Transverse colon (tissue), 4 donors: ENCODE measurements at regions of chr17 and their contacts with region 1.

Region 1: DNA sequence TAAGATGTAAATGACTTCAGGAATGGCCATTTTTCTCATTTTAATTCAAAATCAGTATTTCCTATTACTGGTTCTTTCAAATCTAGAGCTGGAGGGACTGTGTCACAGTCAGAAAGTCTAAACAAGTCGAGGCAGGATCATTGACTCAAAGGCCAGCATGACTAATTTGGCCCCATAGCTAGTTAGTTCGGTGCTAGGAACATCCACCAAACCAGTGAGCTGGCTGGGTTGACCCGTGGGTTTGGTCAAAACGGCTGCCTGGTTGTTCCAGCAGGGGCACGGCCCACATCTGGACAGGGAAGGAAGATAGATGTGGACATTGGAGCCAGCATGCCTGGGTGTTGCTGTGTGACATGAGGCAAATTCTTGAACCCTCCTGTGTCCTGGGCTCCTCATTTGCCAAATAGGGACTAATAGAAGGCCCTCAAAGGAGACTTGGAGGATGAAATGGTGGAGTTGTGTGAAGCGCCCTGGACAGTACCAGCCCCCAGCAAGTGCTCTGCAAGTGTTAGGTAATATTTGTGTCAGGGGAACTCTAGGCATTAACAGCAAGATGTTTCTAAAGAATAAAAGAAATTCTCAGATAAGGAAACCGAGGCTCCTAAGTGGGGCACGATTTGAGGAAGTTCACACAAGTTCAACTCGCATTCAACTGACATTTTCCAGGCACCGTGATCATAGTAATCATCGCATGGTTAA is 46.2 kb downstream of the MEOX1 start:
- DNase-seq: no peak
- H3K4me3 ChIP-seq: no peak overlapping the region
- H3K27ac ChIP-seq: no peak overlapping the region
- H3K4me1 ChIP-seq: peaks cover 0 to 4% (median 0%) of the 10 kb centered on the region in 4 donors
- H3K27me3 ChIP-seq: no peaks in the 10 kb centered on the region
- CTCF ChIP-seq: no peak
- EP300 ChIP-seq: no peak
- POLR2A ChIP-seq: no peak

Region 2: DNA sequence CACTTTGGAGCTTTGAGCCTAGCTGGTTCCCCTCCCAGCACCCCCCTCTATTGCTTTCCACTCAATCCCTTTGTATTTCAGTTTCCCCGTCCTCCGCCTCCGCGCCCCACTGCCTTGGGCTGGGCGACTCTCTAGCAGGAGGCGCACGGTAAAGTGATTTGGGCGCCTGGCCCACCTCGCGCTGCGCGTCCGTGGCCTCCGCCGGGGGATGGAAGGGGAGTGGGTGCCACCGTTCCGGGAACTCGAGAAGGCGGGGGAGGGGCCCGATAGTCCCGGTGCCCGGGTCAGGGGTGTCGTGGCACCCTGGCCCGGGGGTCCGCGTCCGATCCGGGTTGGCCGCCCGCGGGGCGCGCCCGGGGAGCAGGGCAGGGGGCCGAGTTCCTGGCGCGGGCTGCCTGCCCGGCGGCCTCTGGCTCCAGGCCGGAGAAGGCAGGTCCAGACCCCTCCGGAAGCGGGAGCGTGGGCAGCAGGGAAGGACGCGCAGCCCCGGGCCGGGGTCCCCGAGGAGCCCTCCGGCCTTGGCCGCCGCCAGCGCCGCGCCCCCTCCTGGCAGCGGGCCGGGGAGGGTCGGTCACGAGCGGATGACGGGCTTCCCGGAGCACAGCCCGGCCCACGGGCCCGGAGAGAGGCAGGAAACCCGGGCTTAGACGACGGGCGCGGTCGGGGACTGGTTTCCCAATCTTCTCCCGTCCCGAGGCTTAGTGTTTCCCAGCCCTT is 30.4 kb after region 1 on chr17:
- in situ Hi-C with region 1: no loop called
- intact Hi-C with region 1: loop called (anchors 1 kb)
- DNase-seq: peak; percentile 37
- H3K4me3 ChIP-seq: peak overlapping the region; percentile 26 to 50 (median 37)
- H3K27ac ChIP-seq: peak overlapping the region; percentile 65 to 73 (median 66)
- H3K4me1 ChIP-seq: peaks cover 0 to 12% (median 4%) of the 10 kb centered on the region in 4 donors
- H3K27me3 ChIP-seq: peaks cover 33% of the 10 kb centered on the region
- CTCF ChIP-seq: no peak
- EP300 ChIP-seq: no peak
- POLR2A ChIP-seq: no peak

Region 3: DNA sequence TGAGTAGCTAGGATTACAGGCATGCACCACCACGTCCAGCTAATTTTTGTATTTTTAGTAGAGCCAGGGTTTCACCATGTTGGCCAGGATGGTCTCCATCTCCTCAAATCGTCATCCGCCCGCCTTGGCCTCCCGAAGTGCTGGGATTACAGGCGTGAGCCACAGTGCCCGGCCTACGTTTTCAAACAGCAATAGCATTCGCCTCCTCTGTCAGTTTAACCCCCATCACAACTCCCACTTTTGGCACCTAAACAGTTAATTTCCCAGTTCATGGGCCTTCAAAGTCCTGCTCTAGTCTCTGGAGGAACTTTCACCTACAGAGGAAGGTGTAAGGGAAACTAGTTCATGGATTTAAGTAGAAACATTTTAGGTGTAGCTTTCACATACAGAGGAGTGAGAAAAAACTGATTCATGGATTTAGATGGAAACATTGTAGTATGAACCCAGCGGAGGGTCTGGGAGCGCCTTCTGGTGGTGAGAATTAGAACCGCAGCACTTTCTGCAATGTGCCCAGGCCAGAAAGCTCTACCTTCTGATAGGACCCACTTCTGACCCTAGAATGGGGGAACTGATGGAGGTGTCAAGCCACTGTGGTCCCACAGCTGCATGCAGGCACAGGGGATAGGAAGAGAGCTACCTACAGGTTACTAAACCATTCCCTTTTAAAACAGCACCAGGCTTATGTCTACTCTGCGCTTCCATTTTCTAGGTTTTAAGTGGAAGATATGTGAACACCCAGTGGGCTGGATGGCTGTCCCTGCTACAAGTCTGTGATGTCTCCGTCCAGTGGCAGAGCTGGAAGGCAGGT is 58.2 kb after region 1 on chr17:
- in situ Hi-C with region 1: no loop called
- intact Hi-C with region 1: no loop called
- DNase-seq: peak; percentile 80
- H3K4me3 ChIP-seq: no peak overlapping the region
- H3K27ac ChIP-seq: no peak overlapping the region
- H3K4me1 ChIP-seq: peaks cover 10 to 19% (median 16%) of the 10 kb centered on the region in 4 donors
- H3K27me3 ChIP-seq: no peaks in the 10 kb centered on the region
- CTCF ChIP-seq: peak; percentile 91 to 95 (median 93)
- EP300 ChIP-seq: no peak
- POLR2A ChIP-seq: no peak

Region 4: DNA sequence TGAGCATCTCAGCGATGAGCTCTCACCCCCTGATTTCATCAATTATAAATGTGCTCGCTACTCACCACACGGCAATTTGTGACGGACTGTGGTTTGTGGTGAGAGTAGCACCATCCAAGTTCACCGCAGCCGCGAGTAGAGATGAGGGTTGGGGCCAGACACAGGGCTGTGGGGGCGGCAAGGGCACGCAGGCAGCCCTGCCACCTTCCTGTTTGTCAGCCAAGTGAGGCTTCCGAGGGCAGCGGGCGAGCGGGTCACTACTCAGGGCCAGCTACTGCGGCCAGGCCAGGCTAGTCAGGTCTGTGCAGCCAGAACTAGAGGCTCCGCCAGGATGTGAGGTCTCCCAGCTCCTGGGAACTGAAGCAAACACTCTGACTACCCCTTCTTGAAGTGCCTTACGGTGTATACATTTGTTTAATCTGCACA is 85.9 kb after region 1 on chr17:
- in situ Hi-C with region 1: no loop called
- intact Hi-C with region 1: no loop called
- DNase-seq: peak; percentile 20
- H3K4me3 ChIP-seq: no peak overlapping the region
- H3K27ac ChIP-seq: no peak overlapping the region
- H3K4me1 ChIP-seq: peaks cover 0 to 5% (median 2%) of the 10 kb centered on the region in 4 donors
- H3K27me3 ChIP-seq: peaks cover 9% of the 10 kb centered on the region
- CTCF ChIP-seq: no peak
- EP300 ChIP-seq: no peak
- POLR2A ChIP-seq: no peak

Region 5: DNA sequence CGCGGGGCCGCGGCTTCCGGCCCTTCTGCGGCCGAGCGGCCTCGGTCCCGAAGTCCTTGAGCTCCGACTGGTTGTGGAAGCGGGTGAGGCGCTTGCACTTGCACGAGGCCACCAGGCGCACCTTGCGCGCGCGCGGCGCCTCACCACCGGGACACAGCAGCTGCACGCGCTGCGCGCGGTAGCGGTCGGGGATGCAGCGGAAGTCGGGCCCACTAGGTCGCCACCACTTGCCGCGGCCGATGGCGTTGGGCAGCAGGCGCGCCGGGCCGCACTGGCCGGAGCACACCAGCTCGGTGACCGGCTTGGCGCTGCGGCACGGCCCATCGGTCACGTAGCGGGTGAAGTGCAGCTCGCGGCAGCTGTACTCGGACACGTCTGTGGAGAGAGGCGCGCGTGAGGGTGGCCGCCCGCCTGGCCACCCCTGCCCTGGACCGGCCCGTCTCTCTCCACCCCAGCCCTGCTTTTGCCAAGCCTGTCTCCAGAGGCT is 140.0 kb after region 1 on chr17:
- in situ Hi-C with region 1: no loop called
- intact Hi-C with region 1: no loop called
- DNase-seq: no peak
- H3K4me3 ChIP-seq: peak overlapping the region in 1 of 4 donors; percentile 16
- H3K27ac ChIP-seq: no peak overlapping the region
- H3K4me1 ChIP-seq: peaks cover 0 to 8% (median 8%) of the 10 kb centered on the region in 4 donors
- H3K27me3 ChIP-seq: peaks cover 64% of the 10 kb centered on the region
- CTCF ChIP-seq: no peak
- EP300 ChIP-seq: no peak
- POLR2A ChIP-seq: no peak

Region 6: DNA sequence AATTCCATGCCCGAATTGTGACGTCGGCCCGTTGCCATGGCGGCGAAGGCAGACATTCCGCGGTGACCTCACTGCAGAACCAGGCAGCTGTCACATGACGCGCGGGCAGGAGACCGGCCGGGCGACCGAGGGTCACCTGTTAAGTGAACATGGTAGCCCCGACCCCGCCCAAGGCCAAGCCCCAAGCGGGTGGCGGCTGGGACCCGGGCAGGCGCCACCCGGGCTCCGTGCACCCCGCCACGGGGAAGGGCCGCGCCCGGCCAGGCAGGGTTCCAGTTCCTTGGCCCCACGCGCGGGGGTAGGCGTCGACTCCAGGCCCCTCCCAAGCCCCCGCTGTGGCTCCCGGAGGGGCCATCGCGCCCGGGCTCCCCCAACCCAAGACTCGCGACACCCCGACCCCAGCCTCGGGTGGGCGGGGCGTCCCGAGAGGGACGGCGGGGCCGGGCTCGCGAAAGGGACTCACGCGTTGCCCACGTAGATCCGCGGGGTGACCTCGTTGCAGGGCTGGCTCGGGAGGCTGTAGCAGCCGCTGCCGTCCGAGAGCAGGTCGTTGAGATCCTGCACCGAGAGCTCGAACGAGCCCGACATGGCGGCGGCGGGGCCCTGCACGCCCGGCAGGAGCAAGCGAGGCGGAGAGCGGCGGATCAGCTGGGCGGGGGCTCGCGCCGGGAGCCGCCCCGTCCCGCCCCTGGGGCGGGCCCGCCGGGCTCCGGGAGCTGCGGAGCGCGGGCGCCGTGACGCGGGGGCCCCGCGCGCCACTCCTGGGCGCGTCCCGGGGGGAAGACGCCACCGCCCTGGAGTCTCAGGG is 163.1 kb after region 1 on chr17 and contains the start of gene DUSP3:
- in situ Hi-C with region 1: no loop called
- intact Hi-C with region 1: no loop called
- DNase-seq: peak; percentile 96
- H3K4me3 ChIP-seq: peak within 1 kb of the TSS; percentile 79 to 99 (median 88)
- H3K27ac ChIP-seq: peak within 1 kb of the TSS; percentile 96 to 100 (median 100)
- H3K4me1 ChIP-seq: peaks cover 11 to 23% (median 19%) of the 10 kb centered on the region in 4 donors
- H3K27me3 ChIP-seq: peaks cover 15% of the 10 kb centered on the region
- CTCF ChIP-seq: peak in 1 of 5 experiments; percentile 24
- EP300 ChIP-seq: peak; percentile 56
- POLR2A ChIP-seq: peak; percentile 89
- total RNA-seq, gene DUSP3: 52.7 to 145 (median 70.9) TPM